PC-9 (cell line): ENCODE measurements at regions of chr1 and their contacts with region 1.

Region 1: DNA sequence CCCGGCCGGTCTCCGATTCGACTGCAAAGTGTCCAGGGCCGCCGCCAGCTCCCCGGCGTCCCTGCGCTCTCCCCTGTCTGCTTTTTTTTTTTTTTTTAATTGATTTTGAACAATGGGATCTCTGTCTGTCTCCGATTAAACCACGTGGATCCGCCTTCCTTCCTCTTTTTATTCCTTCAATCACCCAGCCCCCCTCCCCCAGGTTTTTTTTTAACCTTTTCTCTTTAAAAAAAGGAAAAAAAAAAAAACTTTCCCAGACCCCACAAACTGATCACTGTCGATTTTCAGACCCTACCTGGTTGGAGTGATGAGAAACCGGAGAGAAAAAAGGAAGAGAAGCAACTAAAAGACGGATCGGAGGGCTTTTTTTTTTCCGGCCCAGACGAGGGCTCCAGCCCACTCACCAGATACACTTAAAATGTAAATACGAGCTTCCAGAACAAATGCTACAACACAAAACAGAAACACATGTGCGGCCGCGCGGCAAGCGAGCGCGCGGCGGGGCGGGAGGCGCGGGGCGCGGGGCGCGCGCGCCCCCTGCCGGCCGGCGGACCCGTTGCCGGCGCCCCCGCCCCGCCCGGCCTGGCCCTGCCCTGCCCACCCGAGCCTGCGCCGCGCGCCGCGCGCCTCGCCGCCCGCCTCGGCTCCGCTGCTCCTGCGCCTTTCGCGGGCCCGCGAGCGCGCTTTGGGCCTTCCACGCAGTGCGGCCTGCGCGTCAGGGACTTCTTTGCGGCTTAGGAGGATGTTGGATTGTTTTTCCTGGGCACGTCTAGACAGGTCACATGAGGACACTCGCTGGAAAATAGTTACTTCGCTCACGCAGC is at the start of gene RCC2:
- DNase-seq: peak; percentile 38 to 57
- H3K4me3 ChIP-seq: peak within 1 kb of the TSS; percentile 96
- H3K27ac ChIP-seq: peak within 1 kb of the TSS; percentile 100
- H3K4me1 ChIP-seq: peaks cover 25% of the 10 kb centered on the region
- H3K27me3 ChIP-seq: no peaks in the 10 kb centered on the region
- CTCF ChIP-seq: no peak
- total RNA-seq, gene RCC2: 158 and 170 TPM in 2 replicates

Region 2: GRCh38 chr1:17393230-17393629 is 46.2 kb before region 1 on chr1:
- CTCF ChIA-PET with region 1: no interaction called
- POLR2A ChIA-PET with region 1: no interaction called
- intact Hi-C with region 1: no loop called
- DNase-seq: no peak
- H3K4me3 ChIP-seq: no peak overlapping the region
- H3K27ac ChIP-seq: no peak overlapping the region
- H3K4me1 ChIP-seq: no peaks in the 10 kb centered on the region
- H3K27me3 ChIP-seq: no peaks in the 10 kb centered on the region
- CTCF ChIP-seq: no peak

Region 3: GRCh38 chr1:17412095-17412844 is 27.2 kb before region 1 on chr1:
- CTCF ChIA-PET with region 1: no interaction called
- POLR2A ChIA-PET with region 1: no interaction called
- intact Hi-C with region 1: loop called (anchors 1 kb)
- DNase-seq: peak; percentile 67 to 77
- H3K4me3 ChIP-seq: no peak overlapping the region
- H3K27ac ChIP-seq: peak overlapping the region; percentile 6; the same call in 1 of the 2 replicates
- H3K4me1 ChIP-seq: no peaks in the 10 kb centered on the region; the same call in 1 of the 2 replicates
- H3K27me3 ChIP-seq: no peaks in the 10 kb centered on the region
- CTCF ChIP-seq: no peak

Region 4: DNA sequence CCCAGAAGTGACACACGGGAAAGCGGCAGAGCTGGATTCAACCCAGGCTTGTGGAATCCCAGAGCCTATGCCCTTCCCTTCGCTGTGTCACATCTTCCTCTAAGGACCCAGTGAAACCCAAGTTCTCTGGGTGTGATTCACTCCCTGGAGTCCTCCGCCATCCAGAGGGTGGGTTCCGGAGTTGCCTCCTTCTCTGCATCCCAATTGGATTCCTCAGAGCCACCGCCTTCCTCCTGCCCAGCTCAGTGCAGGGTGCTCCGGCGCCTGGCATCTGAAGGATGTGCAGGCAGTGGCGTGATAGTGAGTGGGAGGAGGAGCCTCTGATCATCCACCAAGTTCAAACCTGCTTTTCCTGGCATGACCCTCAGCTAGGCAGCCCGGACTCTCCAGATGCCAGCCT is 20.8 kb after region 1 on chr1:
- CTCF ChIA-PET with region 1: no interaction called
- POLR2A ChIA-PET with region 1: no interaction called
- intact Hi-C with region 1: loop called (anchors 1 kb)
- DNase-seq: peak; percentile 85 to 94
- H3K4me3 ChIP-seq: peak overlapping the region; percentile 9; the same call in 1 of the 2 replicates
- H3K27ac ChIP-seq: peak overlapping the region; percentile 87
- H3K4me1 ChIP-seq: peaks cover 10% of the 10 kb centered on the region; the same call in 1 of the 2 replicates
- H3K27me3 ChIP-seq: no peaks in the 10 kb centered on the region
- CTCF ChIP-seq: no peak

Region 5: GRCh38 chr1:17475729-17476128 is 36.3 kb after region 1 on chr1:
- CTCF ChIA-PET with region 1: interaction called, 14 read pairs
- POLR2A ChIA-PET with region 1: no interaction called
- intact Hi-C with region 1: loop called (anchors 1 kb)
- DNase-seq: peak; percentile 75 to 90
- H3K4me3 ChIP-seq: no peak overlapping the region
- H3K27ac ChIP-seq: no peak overlapping the region; the same call in 1 of the 2 replicates
- H3K4me1 ChIP-seq: peaks cover 20% of the 10 kb centered on the region
- H3K27me3 ChIP-seq: no peaks in the 10 kb centered on the region
- CTCF ChIP-seq: no peak

Region 6: DNA sequence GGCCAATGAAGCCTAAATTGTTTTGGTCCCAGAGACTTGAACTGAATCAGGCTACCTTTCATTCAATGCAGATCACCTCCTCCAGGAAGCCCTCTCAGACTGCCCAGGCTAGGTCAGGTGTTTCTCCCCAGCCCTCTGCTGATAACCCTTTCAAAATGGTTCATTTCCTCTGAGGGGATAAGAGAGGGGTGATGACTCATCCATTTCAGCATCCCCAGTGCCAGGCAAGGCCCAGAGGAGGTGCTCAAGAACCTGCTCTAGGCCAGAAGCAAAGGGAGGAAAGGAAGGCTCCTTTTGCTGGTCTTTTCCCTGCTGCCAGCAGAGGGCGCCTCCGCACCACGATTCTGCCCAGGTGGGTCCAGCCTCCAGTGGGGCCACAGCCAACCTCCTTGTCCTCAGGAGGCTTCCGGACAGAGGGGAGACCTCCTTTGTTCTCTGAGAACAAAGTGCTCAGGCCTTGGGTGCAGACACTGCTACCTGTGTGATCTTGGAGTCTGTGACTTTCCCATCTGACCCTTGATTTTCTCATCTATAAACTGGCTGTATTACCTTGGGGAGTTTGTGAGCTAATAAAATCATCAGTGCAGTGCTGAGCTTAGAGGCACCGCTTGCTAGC is 54.8 kb after region 1 on chr1:
- CTCF ChIA-PET with region 1: no interaction called
- POLR2A ChIA-PET with region 1: no interaction called
- intact Hi-C with region 1: loop called (anchors 5 kb)
- DNase-seq: peak; percentile 76 to 77
- H3K4me3 ChIP-seq: no peak overlapping the region
- H3K27ac ChIP-seq: no peak overlapping the region
- H3K4me1 ChIP-seq: peaks cover 7% of the 10 kb centered on the region; the same call in 1 of the 2 replicates
- H3K27me3 ChIP-seq: no peaks in the 10 kb centered on the region
- CTCF ChIP-seq: peak; percentile 89

Region 7: DNA sequence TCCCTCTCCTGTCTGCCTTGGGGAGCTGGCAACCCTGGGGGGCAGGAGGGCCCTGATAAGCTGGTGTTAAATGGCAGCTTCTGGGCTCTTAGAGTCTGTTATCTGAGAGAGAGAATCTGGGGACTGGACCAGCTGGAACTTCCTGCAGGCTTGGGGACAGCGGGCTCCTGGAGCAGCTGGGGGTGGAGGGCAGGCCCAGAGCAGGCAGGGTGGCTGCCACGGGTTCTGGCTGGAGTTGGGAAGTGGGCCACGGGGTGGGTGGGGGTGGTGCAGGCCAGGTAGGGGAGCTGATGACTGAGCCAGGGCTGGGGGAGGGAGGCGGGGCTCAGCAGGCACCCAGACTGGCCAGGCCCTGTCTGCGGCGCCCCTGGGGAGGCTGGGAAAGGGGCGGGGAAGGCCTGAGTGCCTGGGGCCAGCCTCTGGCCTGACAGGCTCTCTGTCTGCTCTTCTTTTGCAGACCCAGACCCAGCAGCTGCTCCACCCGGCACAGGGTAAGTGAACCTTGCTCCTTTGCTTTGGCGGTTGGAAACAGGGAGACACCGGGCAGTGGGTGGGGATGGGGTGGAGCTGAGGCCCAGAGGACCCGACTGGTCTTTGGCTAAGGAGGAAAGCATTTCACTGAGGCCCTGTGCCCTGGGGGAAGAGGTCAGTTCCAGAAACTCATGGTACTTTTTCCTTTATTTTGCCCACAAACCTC is 148.7 kb after region 1 on chr1:
- CTCF ChIA-PET with region 1: no interaction called
- POLR2A ChIA-PET with region 1: no interaction called
- intact Hi-C with region 1: no loop called
- DNase-seq: peak; percentile 62 to 80
- H3K4me3 ChIP-seq: no peak overlapping the region
- H3K27ac ChIP-seq: peak overlapping the region; percentile 66
- H3K4me1 ChIP-seq: peaks cover 18% of the 10 kb centered on the region; the same call in 1 of the 2 replicates
- H3K27me3 ChIP-seq: no peaks in the 10 kb centered on the region
- CTCF ChIP-seq: no peak

Region 8: GRCh38 chr1:18643154-18644012 is 1203.9 kb after region 1 on chr1:
- CTCF ChIA-PET with region 1: no interaction called
- POLR2A ChIA-PET with region 1: interaction called, 22 read pairs
- intact Hi-C with region 1: no loop called
- DNase-seq: no peak
- H3K4me3 ChIP-seq: no peak overlapping the region
- H3K27ac ChIP-seq: no peak overlapping the region
- H3K4me1 ChIP-seq: no peaks in the 10 kb centered on the region
- H3K27me3 ChIP-seq: peaks cover 42% of the 10 kb centered on the region
- CTCF ChIP-seq: no peak